CD4-positive, alpha-beta T cell (primary cell): ENCODE measurements at regions of chr16 and their contacts with region 1.

Region 1: DNA sequence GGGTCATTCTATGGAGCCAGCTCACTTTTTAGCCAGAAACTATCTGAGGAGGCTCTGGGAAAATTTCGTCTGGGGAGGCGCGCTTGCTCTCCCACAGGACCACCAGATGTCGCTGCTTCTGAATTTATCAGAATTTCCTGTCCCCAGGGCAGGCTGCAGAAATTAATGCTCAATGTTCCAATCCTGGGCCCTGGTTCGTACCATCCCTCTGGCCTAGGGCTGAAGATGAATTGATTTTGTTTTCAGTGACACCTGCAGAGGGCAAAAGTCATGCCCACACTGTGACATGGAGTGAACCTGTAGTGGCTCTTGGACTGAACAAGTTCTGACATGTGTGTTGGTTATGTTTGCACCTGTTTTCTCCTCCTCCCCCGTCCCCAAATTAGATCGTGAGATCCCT is 482.6 kb downstream of the NPIPA7 start:
- DNase-seq: peak; percentile 35 to 71 (median 44)
- ATAC-seq: no peak
- H3K4me3 ChIP-seq: no peak overlapping the region
- H3K4me3 Mint-ChIP-seq: no peak overlapping the region
- H3K27ac ChIP-seq: no peak overlapping the region
- H3K27ac Mint-ChIP-seq: no peak overlapping the region
- H3K4me1 ChIP-seq: peaks cover 3% of the 10 kb centered on the region
- H3K4me1 Mint-ChIP-seq: no peaks in the 10 kb centered on the region
- H3K27me3 ChIP-seq: peaks cover 0 to 2% of the 10 kb centered on the region in 2 experiments
- H3K27me3 Mint-ChIP-seq: peaks cover 14% of the 10 kb centered on the region
- CTCF ChIP-seq: peak; percentile 82

Region 2: GRCh38 chr16:16982614-16983013 is 121.1 kb after region 1 on chr16:
- CTCF ChIA-PET with region 1: no interaction called
- POLR2A ChIA-PET with region 1: no interaction called
- intact Hi-C with region 1: loop called in 1 of 2 experiments (anchors 10 kb)
- DNase-seq: no peak
- ATAC-seq: no peak
- H3K4me3 ChIP-seq: no peak overlapping the region
- H3K4me3 Mint-ChIP-seq: no peak overlapping the region
- H3K27ac ChIP-seq: no peak overlapping the region
- H3K27ac Mint-ChIP-seq: no peak overlapping the region
- H3K4me1 ChIP-seq: peaks cover 4% of the 10 kb centered on the region
- H3K4me1 Mint-ChIP-seq: peaks cover 14% of the 10 kb centered on the region
- H3K27me3 ChIP-seq: no peaks in the 10 kb centered on the region
- H3K27me3 Mint-ChIP-seq: no peaks in the 10 kb centered on the region
- CTCF ChIP-seq: no peak

Region 3: DNA sequence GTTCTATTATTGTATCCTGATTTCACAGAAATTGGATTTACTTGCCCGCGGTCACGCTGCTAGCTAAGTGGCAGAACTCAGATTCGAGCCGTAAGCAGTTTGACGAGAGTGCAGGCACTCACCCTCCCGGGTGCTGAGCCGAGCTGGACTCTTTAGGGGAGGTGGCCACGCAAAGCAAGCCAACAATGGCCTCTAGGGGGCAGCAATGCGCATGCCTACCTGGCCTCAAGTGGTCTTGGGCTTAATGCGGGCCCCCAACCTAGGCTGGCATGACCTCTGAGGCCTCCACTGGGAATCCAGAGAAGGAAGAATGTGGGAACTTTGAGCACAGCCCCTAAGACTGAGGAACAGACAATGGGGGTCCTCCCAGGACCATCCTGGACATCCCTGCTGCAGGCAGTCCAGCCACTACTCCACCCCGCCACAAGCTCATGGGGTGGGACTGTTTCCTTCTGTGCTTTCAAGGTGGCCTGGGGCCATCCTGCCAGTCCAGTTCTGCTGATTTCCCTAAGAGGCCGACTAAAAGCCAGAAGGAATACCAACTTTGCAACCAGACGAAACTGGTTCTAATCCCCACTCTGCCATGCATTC is 332.7 kb after region 1 on chr16:
- CTCF ChIA-PET with region 1: interaction called, 3 read pairs
- POLR2A ChIA-PET with region 1: no interaction called
- intact Hi-C with region 1: loop called in 1 of 2 experiments (anchors 10 kb)
- DNase-seq: peak; percentile 36 to 77 (median 50)
- ATAC-seq: no peak
- H3K4me3 ChIP-seq: no peak overlapping the region
- H3K4me3 Mint-ChIP-seq: no peak overlapping the region
- H3K27ac ChIP-seq: no peak overlapping the region
- H3K27ac Mint-ChIP-seq: no peak overlapping the region
- H3K4me1 ChIP-seq: no peaks in the 10 kb centered on the region
- H3K4me1 Mint-ChIP-seq: no peaks in the 10 kb centered on the region
- H3K27me3 ChIP-seq: no peaks in the 10 kb centered on the region
- H3K27me3 Mint-ChIP-seq: no peaks in the 10 kb centered on the region
- CTCF ChIP-seq: peak; percentile 73

Region 4: GRCh38 chr16:17377360-17378324 is 516.1 kb after region 1 on chr16:
- CTCF ChIA-PET with region 1: no interaction called
- POLR2A ChIA-PET with region 1: no interaction called
- intact Hi-C with region 1: loop called in 1 of 2 experiments (anchors 5 kb)
- DNase-seq: peak in 2 of 14 experiments; percentile 51 to 62
- ATAC-seq: no peak
- H3K4me3 ChIP-seq: no peak overlapping the region
- H3K4me3 Mint-ChIP-seq: peak overlapping the region; percentile 46
- H3K27ac ChIP-seq: peak overlapping the region in 1 of 2 donors; percentile 10
- H3K27ac Mint-ChIP-seq: peak overlapping the region; percentile 66
- H3K4me1 ChIP-seq: peaks cover 57% of the 10 kb centered on the region
- H3K4me1 Mint-ChIP-seq: peaks cover 82% of the 10 kb centered on the region
- H3K27me3 ChIP-seq: no peaks in the 10 kb centered on the region
- H3K27me3 Mint-ChIP-seq: no peaks in the 10 kb centered on the region
- CTCF ChIP-seq: no peak

Region 5: GRCh38 chr16:17578921-17579874 is 717.7 kb after region 1 on chr16:
- CTCF ChIA-PET with region 1: no interaction called
- POLR2A ChIA-PET with region 1: no interaction called
- intact Hi-C with region 1: loop called in 1 of 2 experiments (anchors 2 kb)
- DNase-seq: peak; percentile 6 to 80 (median 46)
- ATAC-seq: peak; percentile 73
- H3K4me3 ChIP-seq: no peak overlapping the region
- H3K4me3 Mint-ChIP-seq: no peak overlapping the region
- H3K27ac ChIP-seq: no peak overlapping the region
- H3K27ac Mint-ChIP-seq: no peak overlapping the region
- H3K4me1 ChIP-seq: no peaks in the 10 kb centered on the region
- H3K4me1 Mint-ChIP-seq: no peaks in the 10 kb centered on the region
- H3K27me3 ChIP-seq: no peaks in the 10 kb centered on the region
- H3K27me3 Mint-ChIP-seq: peaks cover 5% of the 10 kb centered on the region
- CTCF ChIP-seq: peak; percentile 93